Breast epithelium (tissue), 4 donors: ENCODE measurements at regions of chr20 and their contacts with region 1.

Region 1: DNA sequence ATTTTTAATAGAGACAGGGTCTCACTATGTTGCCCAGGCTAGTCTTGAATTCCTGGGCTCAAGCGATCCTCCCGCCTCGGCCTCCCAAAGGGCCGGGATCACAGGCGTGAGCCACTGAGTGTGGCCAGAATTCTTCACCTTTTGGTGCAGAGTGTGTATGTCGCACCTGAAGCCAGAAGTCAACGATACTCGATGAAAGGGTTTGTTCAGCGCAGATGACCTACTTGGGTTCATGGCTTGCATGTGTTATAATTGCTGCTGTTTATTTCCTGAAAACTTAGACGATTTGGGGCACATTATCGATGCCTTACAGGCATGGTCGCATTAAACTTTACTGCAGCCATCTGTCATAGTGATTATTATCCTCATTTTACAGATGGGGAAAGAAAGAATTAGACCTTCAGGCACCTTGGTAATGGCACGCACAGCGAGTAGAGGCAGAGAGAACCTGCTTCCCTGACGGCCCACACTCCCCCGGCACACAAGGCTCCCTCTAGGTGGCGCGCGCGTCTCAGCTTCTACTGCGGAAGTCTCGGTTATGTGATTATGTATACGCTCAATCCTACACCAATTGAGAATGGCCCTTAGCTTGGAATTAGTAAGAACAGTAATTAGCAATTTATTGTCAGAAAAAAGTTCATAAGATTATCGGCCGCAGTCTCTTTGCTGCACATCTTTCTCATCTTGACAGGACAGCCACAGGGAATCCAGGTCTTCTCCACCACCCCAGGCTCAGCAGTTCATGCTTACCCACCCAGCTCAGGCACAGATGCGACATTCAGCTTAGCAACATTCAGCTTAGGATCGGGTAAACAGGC is 212.8 kb upstream of the PROKR2 start:
- DNase-seq: peak; percentile 63 to 85
- H3K4me3 ChIP-seq: peak overlapping the region in 2 of 3 donors; percentile 1 to 13
- H3K27ac ChIP-seq: no peak overlapping the region
- H3K4me1 ChIP-seq: no peaks in the 10 kb centered on the region
- H3K27me3 ChIP-seq: no peaks in the 10 kb centered on the region
- CTCF ChIP-seq: peak; percentile 19 to 63 (median 62)
- POLR2A ChIP-seq: no peak

Region 2: DNA sequence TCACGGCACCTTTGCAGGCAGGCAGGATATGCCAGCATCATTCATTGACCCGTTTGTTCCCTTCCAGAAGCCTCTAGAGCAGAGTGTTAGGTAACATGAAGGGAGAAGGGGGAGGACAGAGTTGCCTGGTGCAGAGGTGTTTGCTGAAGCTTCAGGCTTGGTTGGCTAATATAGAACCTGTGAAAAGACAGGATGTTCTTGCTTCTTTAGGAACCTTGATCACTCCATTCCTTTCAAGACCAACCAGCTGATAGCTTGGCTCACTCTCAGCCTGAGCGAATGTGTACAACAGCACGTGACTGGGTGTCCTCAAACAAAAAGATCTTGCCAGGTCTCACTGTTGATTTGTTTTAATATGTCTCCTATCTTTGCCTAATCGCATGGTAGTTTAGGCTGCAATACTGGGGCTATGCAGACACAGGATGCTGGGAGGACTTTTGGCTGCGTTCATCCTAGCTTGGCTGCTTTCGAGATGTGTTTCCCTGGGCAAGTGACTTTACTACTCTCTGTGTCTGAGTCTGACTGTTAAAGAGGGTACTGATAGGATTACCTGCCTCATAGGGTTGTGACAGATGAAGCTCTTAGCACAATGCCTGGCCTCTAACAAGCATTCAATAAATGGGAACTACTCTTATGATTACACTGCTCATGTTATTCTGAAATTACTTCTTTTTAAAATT is 236.7 kb after region 1 on chr20:
- intact Hi-C with region 1: loop called (anchors 5 kb)
- DNase-seq: no peak
- H3K4me3 ChIP-seq: no peak overlapping the region
- H3K27ac ChIP-seq: no peak overlapping the region
- H3K4me1 ChIP-seq: no peaks in the 10 kb centered on the region
- H3K27me3 ChIP-seq: no peaks in the 10 kb centered on the region
- CTCF ChIP-seq: no peak
- POLR2A ChIP-seq: no peak